CD4-positive, alpha-beta T cell (primary cell): ENCODE measurements at regions of chr2 and their contacts with region 1.

Region 1: GRCh38 chr2:157302492-157303099 is 23.0 kb downstream of the ERMN start:
- DNase-seq: peak in 9 of 14 experiments; percentile 5 to 74 (median 24)
- ATAC-seq: peak; percentile 83
- H3K4me3 ChIP-seq: no peak overlapping the region
- H3K4me3 Mint-ChIP-seq: no peak overlapping the region
- H3K27ac ChIP-seq: no peak overlapping the region
- H3K27ac Mint-ChIP-seq: no peak overlapping the region
- H3K4me1 ChIP-seq: no peaks in the 10 kb centered on the region
- H3K4me1 Mint-ChIP-seq: peaks cover 28% of the 10 kb centered on the region
- H3K27me3 ChIP-seq: no peaks in the 10 kb centered on the region
- H3K27me3 Mint-ChIP-seq: peaks cover 8% of the 10 kb centered on the region
- CTCF ChIP-seq: peak; percentile 98

Region 2: DNA sequence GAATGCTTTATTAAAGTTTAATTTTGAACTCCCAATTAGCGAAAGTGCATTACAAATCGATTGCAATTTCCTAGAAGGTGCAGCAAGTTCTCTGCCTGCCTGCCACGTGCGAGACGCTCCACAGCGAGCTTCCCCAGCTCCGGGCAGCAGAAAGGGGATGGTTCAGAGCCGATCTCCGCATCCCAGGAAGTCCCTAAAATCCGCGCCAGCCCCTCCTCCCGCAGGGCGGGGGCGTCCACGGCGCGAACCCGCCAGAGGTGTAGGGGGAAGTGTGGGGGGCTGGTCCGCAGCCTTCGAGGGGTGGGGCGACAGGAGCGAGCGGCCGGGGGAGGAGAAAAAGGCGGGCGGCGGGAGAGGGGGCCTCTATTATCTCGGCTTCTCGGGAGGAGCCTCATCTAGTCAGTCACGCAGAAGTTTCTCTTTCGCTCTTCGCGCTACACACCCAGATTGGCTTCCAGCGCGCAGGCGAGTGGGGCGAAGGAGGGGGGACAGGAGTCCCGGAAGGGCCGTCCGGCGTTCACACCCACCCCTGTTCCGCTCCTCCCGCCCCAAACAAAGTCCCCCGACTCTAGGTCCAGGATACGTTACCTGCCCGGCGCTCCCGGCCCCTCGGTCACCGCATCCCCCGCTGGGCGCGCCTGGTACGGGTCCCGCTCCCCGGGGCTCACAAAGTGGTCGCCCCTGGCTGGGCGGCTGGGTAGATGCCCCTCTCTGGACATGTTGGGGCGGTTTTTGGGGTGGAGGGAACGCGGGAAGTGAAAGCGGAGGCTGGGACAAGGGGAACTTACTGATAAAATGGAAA is 960.9 kb before region 1 on chr2:
- CTCF ChIA-PET with region 1: no interaction called
- POLR2A ChIA-PET with region 1: no interaction called
- intact Hi-C with region 1: loop called in 1 of 2 experiments (anchors 10 kb)
- DNase-seq: peak; percentile 72 to 95 (median 81)
- ATAC-seq: peak; percentile 74
- H3K4me3 ChIP-seq: peak overlapping the region; percentile 87
- H3K4me3 Mint-ChIP-seq: peak overlapping the region; percentile 99
- H3K27ac ChIP-seq: peak overlapping the region; percentile 99
- H3K27ac Mint-ChIP-seq: peak overlapping the region; percentile 98
- H3K4me1 ChIP-seq: peaks cover 9% of the 10 kb centered on the region
- H3K4me1 Mint-ChIP-seq: peaks cover 49% of the 10 kb centered on the region
- H3K27me3 ChIP-seq: no peaks in the 10 kb centered on the region
- H3K27me3 Mint-ChIP-seq: no peaks in the 10 kb centered on the region
- CTCF ChIP-seq: no peak

Region 3: GRCh38 chr2:157492189-157492773 is 189.7 kb after region 1 on chr2:
- CTCF ChIA-PET with region 1: interaction called, 11 read pairs
- POLR2A ChIA-PET with region 1: no interaction called
- intact Hi-C with region 1: no loop called
- DNase-seq: peak; percentile 57 to 86 (median 66)
- ATAC-seq: peak; percentile 92
- H3K4me3 ChIP-seq: no peak overlapping the region
- H3K4me3 Mint-ChIP-seq: no peak overlapping the region
- H3K27ac ChIP-seq: no peak overlapping the region
- H3K27ac Mint-ChIP-seq: no peak overlapping the region
- H3K4me1 ChIP-seq: peaks cover 7% of the 10 kb centered on the region
- H3K4me1 Mint-ChIP-seq: peaks cover 47% of the 10 kb centered on the region
- H3K27me3 ChIP-seq: no peaks in the 10 kb centered on the region
- H3K27me3 Mint-ChIP-seq: no peaks in the 10 kb centered on the region
- CTCF ChIP-seq: peak; percentile 83

Region 4: DNA sequence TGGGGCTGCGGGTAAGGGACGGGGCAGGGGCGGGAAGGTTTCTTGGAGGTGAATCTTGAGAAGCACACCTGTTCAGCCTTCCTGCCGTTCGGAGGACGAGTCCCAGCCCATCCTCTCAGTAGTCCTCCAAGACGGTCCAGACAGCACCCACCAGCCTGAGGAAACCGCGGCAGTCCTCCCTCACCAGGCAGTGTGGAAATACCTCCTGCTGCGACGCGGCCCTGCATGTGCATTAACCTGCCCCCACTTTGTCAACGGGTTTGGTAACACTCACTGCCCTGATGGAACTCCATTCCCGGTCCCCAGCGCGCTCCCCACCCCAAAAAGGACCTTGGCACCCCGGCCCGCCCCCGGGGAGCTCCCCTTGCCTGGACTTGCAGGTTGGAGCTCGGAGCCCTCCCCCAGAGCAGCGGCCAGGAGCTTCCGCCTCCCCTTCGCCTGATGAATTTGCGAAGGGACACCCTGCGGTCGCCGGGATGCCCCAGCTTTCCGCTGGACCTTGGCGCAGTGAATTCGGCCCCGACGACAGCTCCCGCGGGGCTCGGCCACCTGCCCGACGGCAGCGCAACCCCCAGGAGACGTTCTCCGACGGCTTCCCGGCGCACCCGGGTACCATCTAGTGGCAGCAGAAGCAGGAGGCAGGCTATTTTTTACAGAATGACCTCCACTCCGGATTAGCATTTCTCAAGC is 294.5 kb after region 1 on chr2:
- CTCF ChIA-PET with region 1: interaction called, 7 read pairs
- POLR2A ChIA-PET with region 1: interaction called, 10 read pairs
- intact Hi-C with region 1: loop called (anchors 1 to 2 kb)
- DNase-seq: peak; percentile 31 to 70 (median 50)
- ATAC-seq: peak; percentile 76
- H3K4me3 ChIP-seq: peak overlapping the region; percentile 45
- H3K4me3 Mint-ChIP-seq: peak overlapping the region; percentile 70
- H3K27ac ChIP-seq: no peak overlapping the region
- H3K27ac Mint-ChIP-seq: no peak overlapping the region
- H3K4me1 ChIP-seq: peaks cover 6% of the 10 kb centered on the region
- H3K4me1 Mint-ChIP-seq: peaks cover 16% of the 10 kb centered on the region
- H3K27me3 ChIP-seq: peaks cover 0 to 5% of the 10 kb centered on the region in 2 experiments
- H3K27me3 Mint-ChIP-seq: no peaks in the 10 kb centered on the region
- CTCF ChIP-seq: peak; percentile 68

Region 5: GRCh38 chr2:157777427-157777826 is 474.8 kb after region 1 on chr2:
- CTCF ChIA-PET with region 1: no interaction called
- POLR2A ChIA-PET with region 1: no interaction called
- intact Hi-C with region 1: loop called in 1 of 2 experiments (anchors 10 kb)
- DNase-seq: peak; percentile 13 to 62 (median 39)
- ATAC-seq: no peak
- H3K4me3 ChIP-seq: no peak overlapping the region
- H3K4me3 Mint-ChIP-seq: no peak overlapping the region
- H3K27ac ChIP-seq: no peak overlapping the region
- H3K27ac Mint-ChIP-seq: no peak overlapping the region
- H3K4me1 ChIP-seq: peaks cover 8% of the 10 kb centered on the region
- H3K4me1 Mint-ChIP-seq: peaks cover 13% of the 10 kb centered on the region
- H3K27me3 ChIP-seq: no peaks in the 10 kb centered on the region
- H3K27me3 Mint-ChIP-seq: no peaks in the 10 kb centered on the region
- CTCF ChIP-seq: peak; percentile 64

Region 6: GRCh38 chr2:158456309-158457066 is 1153.9 kb after region 1 on chr2 and contains the starts of genes CCDC148 and PKP4:
- CTCF ChIA-PET with region 1: no interaction called
- POLR2A ChIA-PET with region 1: interaction called, 3 read pairs
- intact Hi-C with region 1: loop called in 1 of 2 experiments (anchors 10 kb)
- DNase-seq: peak; percentile 71 to 97 (median 84)
- ATAC-seq: peak; percentile 90
- H3K4me3 ChIP-seq: peak within 1 kb of the TSS; percentile 76
- H3K4me3 Mint-ChIP-seq: peak within 1 kb of the TSS; percentile 99
- H3K27ac ChIP-seq: peak within 1 kb of the TSS; percentile 33 to 47
- H3K27ac Mint-ChIP-seq: peak within 1 kb of the TSS; percentile 84
- H3K4me1 ChIP-seq: peaks cover 15% of the 10 kb centered on the region
- H3K4me1 Mint-ChIP-seq: peaks cover 28% of the 10 kb centered on the region
- H3K27me3 ChIP-seq: no peaks in the 10 kb centered on the region
- H3K27me3 Mint-ChIP-seq: no peaks in the 10 kb centered on the region
- CTCF ChIP-seq: no peak
- total RNA-seq, gene CCDC148: not detected
- total RNA-seq, gene PKP4: 10.8 to 14.6 TPM

Region 7: GRCh38 chr2:158753641-158754611 is 1451.3 kb after region 1 on chr2:
- CTCF ChIA-PET with region 1: no interaction called
- POLR2A ChIA-PET with region 1: no interaction called
- intact Hi-C with region 1: loop called (anchors 5 kb)
- DNase-seq: peak in 9 of 14 experiments; percentile 4 to 66 (median 12)
- ATAC-seq: peak; percentile 61
- H3K4me3 ChIP-seq: no peak overlapping the region
- H3K4me3 Mint-ChIP-seq: no peak overlapping the region
- H3K27ac ChIP-seq: no peak overlapping the region
- H3K27ac Mint-ChIP-seq: no peak overlapping the region
- H3K4me1 ChIP-seq: no peaks in the 10 kb centered on the region
- H3K4me1 Mint-ChIP-seq: no peaks in the 10 kb centered on the region
- H3K27me3 ChIP-seq: peaks cover 0 to 5% of the 10 kb centered on the region in 2 experiments
- H3K27me3 Mint-ChIP-seq: peaks cover 48% of the 10 kb centered on the region
- CTCF ChIP-seq: peak; percentile 90